Activated T-helper 2 cell treated with anti-CD3 and anti-CD28 coated beads, Interferon-gamma antibody, Interleukin-2, Interleukin-4, amounts not matched to agents 10 μg/mL and 5 μg/mL and 100 μg/mL, durations not matched to agents 14 hours and 24 hours and 36 hours (primary cell): ENCODE measurements at regions of chr1 and their contacts with region 1.

Region 1: DNA sequence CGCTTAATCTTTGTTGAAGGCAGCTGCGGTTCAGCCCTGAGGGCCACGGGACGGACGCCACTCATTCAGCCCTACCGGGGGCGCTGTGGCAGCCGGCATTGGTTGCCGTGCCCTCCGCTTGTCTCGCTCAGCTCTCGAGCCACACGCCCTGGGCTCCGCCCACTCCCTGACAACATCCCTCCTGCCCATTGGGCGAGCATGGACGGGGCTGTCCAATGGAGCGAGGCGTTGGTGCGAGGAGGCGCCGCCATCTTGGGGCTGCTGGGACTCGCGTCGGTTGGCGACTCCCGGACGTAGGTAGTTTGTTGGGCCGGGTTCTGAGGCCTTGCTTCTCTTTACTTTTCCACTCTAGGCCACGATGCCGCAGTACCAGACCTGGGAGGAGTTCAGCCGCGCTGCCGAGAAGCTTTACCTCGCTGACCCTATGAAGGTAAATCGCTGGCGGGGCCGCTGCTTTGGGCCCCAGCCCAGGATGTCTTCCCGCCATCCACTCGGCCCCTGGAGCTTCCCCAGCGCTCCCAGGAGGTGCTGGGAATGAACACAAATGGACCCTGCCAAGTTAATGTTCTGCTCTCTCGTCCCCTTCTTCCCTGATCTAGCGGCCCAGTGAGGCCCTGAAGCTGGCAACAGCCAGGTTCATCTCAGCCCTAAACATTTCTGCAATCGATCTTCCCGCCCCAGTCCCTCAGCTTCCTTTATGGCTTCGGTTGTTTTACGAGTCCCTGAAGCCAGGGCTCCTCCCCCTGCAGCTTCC is at the start of gene SRP9:
- DNase-seq: peak; percentile 99
- H3K4me3 Mint-ChIP-seq: no peak within 1 kb of the TSS
- H3K27ac Mint-ChIP-seq: no peak within 1 kb of the TSS
- H3K4me1 Mint-ChIP-seq: peaks cover 15% of the 10 kb centered on the region
- H3K27me3 Mint-ChIP-seq: no peaks in the 10 kb centered on the region
- total RNA-seq, gene SRP9: 255 and 270 TPM in 2 replicates

Region 2: DNA sequence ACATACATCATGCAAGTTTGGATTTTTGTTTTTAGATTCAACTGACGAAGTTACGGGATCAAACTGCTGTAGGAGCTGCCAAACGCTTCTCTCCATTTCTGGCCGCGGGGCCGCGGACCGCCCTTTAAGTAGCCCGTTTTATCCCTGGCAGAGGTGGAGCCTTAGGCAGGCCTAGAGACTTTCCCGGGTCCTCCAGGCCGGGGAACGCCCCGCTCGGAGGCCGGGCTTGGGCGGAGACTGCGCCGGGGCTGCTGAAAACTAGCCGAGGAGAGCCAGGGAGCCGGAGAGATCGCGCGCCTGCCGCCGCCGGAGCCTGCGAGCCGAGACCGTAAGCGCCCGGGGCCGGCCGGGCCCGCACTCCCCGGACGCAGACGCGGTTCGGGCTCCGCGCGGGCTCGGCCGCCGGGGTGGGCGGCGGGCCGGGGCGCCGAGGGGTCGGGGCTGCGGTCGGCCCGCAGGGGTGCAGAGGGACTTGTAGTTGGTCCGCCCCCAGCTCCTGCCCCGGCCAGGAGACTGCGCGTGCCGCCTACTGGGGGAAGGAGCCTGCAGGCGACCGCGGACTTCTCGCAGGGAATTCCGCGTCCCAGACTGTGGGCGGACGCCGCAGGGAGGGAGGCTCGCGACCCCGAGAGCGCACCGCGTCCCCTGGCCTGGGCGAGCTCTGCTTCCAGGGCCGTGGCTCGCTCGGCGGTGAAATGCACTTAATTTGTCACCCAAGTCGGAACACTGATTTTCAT is 32.2 kb after region 1 on chr1 and contains the start of gene EPHX1:
- intact Hi-C with region 1: loop called (anchors 5 kb)
- DNase-seq: peak; percentile 66
- H3K4me3 Mint-ChIP-seq: peak within 1 kb of the TSS; percentile 80
- H3K27ac Mint-ChIP-seq: no peak within 1 kb of the TSS
- H3K4me1 Mint-ChIP-seq: peaks cover 4% of the 10 kb centered on the region
- H3K27me3 Mint-ChIP-seq: peaks cover 11% of the 10 kb centered on the region
- total RNA-seq, gene EPHX1: 2.2 and 2.9 TPM in 2 replicates

Region 3: DNA sequence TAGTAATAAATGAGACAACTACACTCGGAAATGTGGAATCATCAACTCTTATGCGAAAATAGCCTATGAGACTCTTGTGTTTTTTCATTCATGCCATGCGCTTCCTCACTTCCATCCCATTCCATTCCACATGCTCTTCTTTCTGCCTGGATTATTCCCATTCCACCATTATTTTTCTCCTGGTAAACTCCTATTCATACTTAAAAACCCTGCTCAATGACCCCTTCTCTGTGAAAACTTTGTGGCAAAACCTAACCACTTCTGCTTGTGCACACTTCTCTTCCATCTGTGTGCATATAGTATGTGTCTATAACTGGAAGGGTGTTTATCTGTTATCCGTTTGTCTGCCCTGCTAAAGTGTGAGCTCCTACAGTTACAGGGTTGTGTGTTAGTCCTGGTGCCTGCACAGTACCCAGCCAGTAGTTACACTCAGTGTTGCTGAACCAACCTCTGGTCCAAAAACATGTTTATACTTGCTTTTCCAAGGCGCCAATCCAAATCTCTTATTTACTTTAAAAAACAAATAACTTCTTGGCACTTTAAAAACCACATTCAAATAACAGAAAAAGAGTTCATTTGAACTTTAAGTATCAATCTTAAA is 42.9 kb after region 1 on chr1:
- intact Hi-C with region 1: no loop called
- DNase-seq: no peak
- H3K4me3 Mint-ChIP-seq: no peak overlapping the region
- H3K27ac Mint-ChIP-seq: no peak overlapping the region
- H3K4me1 Mint-ChIP-seq: peaks cover 6% of the 10 kb centered on the region
- H3K27me3 Mint-ChIP-seq: peaks cover 1% of the 10 kb centered on the region

Region 4: GRCh38 chr1:225923692-225924555 is 146.2 kb after region 1 on chr1 and contains the start of gene PYCR2:
- intact Hi-C with region 1: loop called (anchors 1 kb)
- DNase-seq: peak; percentile 94
- H3K4me3 Mint-ChIP-seq: peak within 1 kb of the TSS; percentile 92
- H3K27ac Mint-ChIP-seq: peak within 1 kb of the TSS; percentile 91
- H3K4me1 Mint-ChIP-seq: peaks cover 43% of the 10 kb centered on the region
- H3K27me3 Mint-ChIP-seq: no peaks in the 10 kb centered on the region
- total RNA-seq, gene PYCR2: 117 and 121 TPM in 2 replicates

Region 5: GRCh38 chr1:225977937-225978748 is 200.4 kb after region 1 on chr1:
- intact Hi-C with region 1: loop called (anchors 5 kb)
- DNase-seq: no peak
- H3K4me3 Mint-ChIP-seq: no peak overlapping the region
- H3K27ac Mint-ChIP-seq: no peak overlapping the region
- H3K4me1 Mint-ChIP-seq: peaks cover 4% of the 10 kb centered on the region
- H3K27me3 Mint-ChIP-seq: no peaks in the 10 kb centered on the region